Naive thymus-derived CD8-positive, alpha-beta T cell (primary cell): ENCODE measurements at regions of chr15 and their contacts with region 1.

Region 1: DNA sequence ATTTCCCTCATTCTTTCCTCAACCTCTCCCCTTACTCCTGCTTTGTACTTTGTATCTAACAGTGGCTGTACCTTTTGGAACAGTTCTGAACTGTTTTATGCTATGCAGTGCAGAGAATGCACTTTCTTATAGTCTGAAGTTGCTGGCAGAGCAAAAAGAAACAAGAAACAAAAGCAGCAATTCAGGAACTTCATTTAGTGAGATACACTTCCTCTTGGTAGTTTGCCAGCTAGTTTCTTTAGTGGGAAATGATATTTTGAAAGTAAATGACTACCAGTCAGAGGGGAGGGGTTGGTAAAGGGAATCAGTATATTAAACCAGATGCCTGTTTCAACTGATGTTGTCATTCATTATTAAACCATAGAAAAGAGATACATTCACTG is 55.0 kb upstream of the CHD2 start:
- DNase-seq: peak in 4 of 10 donors; percentile 13 to 78 (median 71)
- ATAC-seq: peak; percentile 38 to 43
- H3K4me3 Mint-ChIP-seq: peak overlapping the region; percentile 68 to 92 (median 88)
- H3K27ac Mint-ChIP-seq: peak overlapping the region; percentile 90 to 100 (median 97)
- H3K4me1 Mint-ChIP-seq: peaks cover 32 to 86% (median 74%) of the 10 kb centered on the region in 4 donors
- H3K27me3 Mint-ChIP-seq: no peaks in the 10 kb centered on the region

Region 2: GRCh38 chr15:92820236-92821021 is 24.7 kb before region 1 on chr15:
- POLR2A ChIA-PET with region 1: interaction called, 19 read pairs
- DNase-seq: peak; percentile 78 to 93 (median 83)
- ATAC-seq: peak; percentile 79 to 91
- H3K4me3 Mint-ChIP-seq: peak overlapping the region; percentile 86 to 95 (median 89)
- H3K27ac Mint-ChIP-seq: peak overlapping the region; percentile 85 to 98 (median 97)
- H3K4me1 Mint-ChIP-seq: peaks cover 16 to 60% (median 49%) of the 10 kb centered on the region in 4 donors
- H3K27me3 Mint-ChIP-seq: no peaks in the 10 kb centered on the region

Region 3: GRCh38 chr15:92861742-92862141 is 16.6 kb after region 1 on chr15:
- POLR2A ChIA-PET with region 1: interaction called, 12 read pairs
- DNase-seq: no peak
- ATAC-seq: no peak
- H3K4me3 Mint-ChIP-seq: no peak overlapping the region
- H3K27ac Mint-ChIP-seq: no peak overlapping the region
- H3K4me1 Mint-ChIP-seq: peaks cover 2 to 4% (median 3%) of the 10 kb centered on the region in 4 donors
- H3K27me3 Mint-ChIP-seq: no peaks in the 10 kb centered on the region

Region 4: GRCh38 chr15:92868992-92869988 is 24.2 kb after region 1 on chr15:
- POLR2A ChIA-PET with region 1: interaction called, 11 read pairs
- DNase-seq: no peak
- ATAC-seq: no peak
- H3K4me3 Mint-ChIP-seq: no peak overlapping the region
- H3K27ac Mint-ChIP-seq: peak overlapping the region in 1 of 10 donors; percentile 32
- H3K4me1 Mint-ChIP-seq: peaks cover 3 to 15% (median 5%) of the 10 kb centered on the region in 4 donors
- H3K27me3 Mint-ChIP-seq: no peaks in the 10 kb centered on the region